CD4-positive, alpha-beta memory T cell (primary cell): ENCODE measurements at regions of chr2 and their contacts with region 1.

Region 1: GRCh38 chr2:105521205-105521604 is 122.4 kb upstream of the FHL2 start:
- DNase-seq: peak in 4 of 5 donors; percentile 8 to 24 (median 10)
- H3K4me3 ChIP-seq: no peak overlapping the region
- H3K4me3 Mint-ChIP-seq: no peak overlapping the region
- H3K27ac ChIP-seq: no peak overlapping the region
- H3K27ac Mint-ChIP-seq: no peak overlapping the region
- H3K4me1 ChIP-seq: no peaks in the 10 kb centered on the region
- H3K4me1 Mint-ChIP-seq: no peaks in the 10 kb centered on the region
- H3K27me3 ChIP-seq: no peaks in the 10 kb centered on the region
- H3K27me3 Mint-ChIP-seq: peaks cover 3 to 7% of the 10 kb centered on the region in 2 donors

Region 2: DNA sequence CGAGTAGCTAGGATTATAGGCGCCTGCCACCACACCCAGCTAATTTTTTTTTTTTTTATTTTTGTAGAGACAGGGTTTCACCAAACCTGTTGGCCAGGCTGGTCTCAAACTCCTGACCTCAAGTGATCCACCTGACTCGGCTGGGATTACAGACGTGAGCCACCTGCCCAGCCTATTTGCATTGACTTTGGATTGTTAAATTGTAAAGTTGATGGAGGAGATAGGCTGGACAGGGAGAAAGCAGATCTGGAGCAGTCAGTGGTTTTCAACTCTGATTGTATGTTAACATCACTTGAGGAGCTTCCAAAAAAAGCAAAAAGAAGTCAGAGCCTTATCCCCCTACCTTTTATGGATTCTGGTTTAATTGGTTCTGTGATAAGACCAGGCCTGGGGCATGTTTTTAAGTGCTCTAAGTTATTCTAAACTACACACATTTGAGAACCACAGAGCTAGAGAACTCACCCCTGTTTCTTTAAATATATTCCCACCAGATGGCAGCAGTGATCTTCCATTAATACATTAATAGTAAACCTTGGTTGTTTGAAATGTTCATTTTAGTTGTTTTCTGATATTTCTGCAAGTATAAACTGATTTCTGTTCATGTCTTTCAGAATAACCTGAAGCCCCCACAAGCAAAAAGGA is 176.4 kb before region 1 on chr2:
- CTCF ChIA-PET with region 1: interaction called, 5 read pairs
- POLR2A ChIA-PET with region 1: no interaction called
- intact Hi-C with region 1: loop called (anchors 1 kb)
- DNase-seq: peak in 3 of 5 donors; percentile 20 to 29 (median 26)
- H3K4me3 ChIP-seq: no peak overlapping the region
- H3K4me3 Mint-ChIP-seq: no peak overlapping the region
- H3K27ac ChIP-seq: no peak overlapping the region
- H3K27ac Mint-ChIP-seq: peak overlapping the region in 1 of 7 donors; percentile 22
- H3K4me1 ChIP-seq: no peaks in the 10 kb centered on the region
- H3K4me1 Mint-ChIP-seq: peaks cover 5 to 9% (median 7%) of the 10 kb centered on the region in 4 donors
- H3K27me3 ChIP-seq: no peaks in the 10 kb centered on the region
- H3K27me3 Mint-ChIP-seq: no peaks in the 10 kb centered on the region

Region 3: DNA sequence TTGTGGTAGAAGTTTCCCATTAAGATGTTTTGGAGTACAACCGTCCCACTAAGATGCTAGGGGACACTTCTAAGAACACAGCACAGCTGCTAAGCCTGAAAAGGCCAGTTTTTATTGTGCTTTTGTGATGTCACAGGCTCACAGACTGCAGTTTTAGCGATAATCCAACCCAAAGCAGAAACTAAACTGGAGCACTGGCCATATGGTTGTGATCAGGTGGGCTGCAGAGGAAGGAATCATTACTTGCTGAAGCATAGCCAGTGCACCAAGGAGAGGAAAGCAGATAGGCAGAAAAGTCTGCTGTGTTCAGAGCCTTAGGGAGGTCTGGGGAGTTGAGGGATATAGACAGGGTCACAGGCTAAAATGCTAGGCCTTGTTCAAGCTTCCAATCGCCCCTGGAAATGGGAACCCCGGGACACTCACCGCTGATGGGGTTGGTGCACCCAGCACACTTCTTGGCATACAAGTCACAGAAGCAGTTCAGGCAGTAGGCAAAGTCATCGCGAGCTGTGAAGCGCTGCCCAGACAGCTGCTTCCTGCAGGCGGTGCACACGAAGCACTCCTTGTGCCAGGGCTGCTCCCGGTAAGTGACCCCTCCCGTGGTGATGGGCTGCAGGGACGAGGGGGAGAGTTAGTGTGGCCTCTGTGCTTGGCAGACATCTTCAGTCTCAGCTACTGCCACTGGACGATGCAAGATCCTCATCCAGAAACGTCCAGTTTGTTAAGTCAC is 158.2 kb before region 1 on chr2:
- CTCF ChIA-PET with region 1: interaction called, 77 read pairs
- POLR2A ChIA-PET with region 1: no interaction called
- intact Hi-C with region 1: no loop called
- DNase-seq: no peak
- H3K4me3 ChIP-seq: no peak overlapping the region
- H3K4me3 Mint-ChIP-seq: no peak overlapping the region
- H3K27ac ChIP-seq: no peak overlapping the region
- H3K27ac Mint-ChIP-seq: peak overlapping the region in 1 of 7 donors; percentile 52
- H3K4me1 ChIP-seq: peaks cover 12% of the 10 kb centered on the region
- H3K4me1 Mint-ChIP-seq: peaks cover 16 to 28% (median 22%) of the 10 kb centered on the region in 4 donors
- H3K27me3 ChIP-seq: no peaks in the 10 kb centered on the region
- H3K27me3 Mint-ChIP-seq: no peaks in the 10 kb centered on the region

Region 4: GRCh38 chr2:105369747-105370690 is 151.2 kb before region 1 on chr2:
- CTCF ChIA-PET with region 1: interaction called, 77 read pairs
- POLR2A ChIA-PET with region 1: no interaction called
- intact Hi-C with region 1: loop called (anchors 1 kb)
- DNase-seq: peak; percentile 77 to 85 (median 82)
- H3K4me3 ChIP-seq: no peak overlapping the region
- H3K4me3 Mint-ChIP-seq: peak overlapping the region in 7 of 8 donors; percentile 0 to 65 (median 16)
- H3K27ac ChIP-seq: no peak overlapping the region
- H3K27ac Mint-ChIP-seq: peak overlapping the region in 5 of 7 donors; percentile 14 to 68 (median 25)
- H3K4me1 ChIP-seq: peaks cover 27% of the 10 kb centered on the region
- H3K4me1 Mint-ChIP-seq: peaks cover 15 to 27% (median 25%) of the 10 kb centered on the region in 4 donors
- H3K27me3 ChIP-seq: no peaks in the 10 kb centered on the region
- H3K27me3 Mint-ChIP-seq: no peaks in the 10 kb centered on the region

Region 5: DNA sequence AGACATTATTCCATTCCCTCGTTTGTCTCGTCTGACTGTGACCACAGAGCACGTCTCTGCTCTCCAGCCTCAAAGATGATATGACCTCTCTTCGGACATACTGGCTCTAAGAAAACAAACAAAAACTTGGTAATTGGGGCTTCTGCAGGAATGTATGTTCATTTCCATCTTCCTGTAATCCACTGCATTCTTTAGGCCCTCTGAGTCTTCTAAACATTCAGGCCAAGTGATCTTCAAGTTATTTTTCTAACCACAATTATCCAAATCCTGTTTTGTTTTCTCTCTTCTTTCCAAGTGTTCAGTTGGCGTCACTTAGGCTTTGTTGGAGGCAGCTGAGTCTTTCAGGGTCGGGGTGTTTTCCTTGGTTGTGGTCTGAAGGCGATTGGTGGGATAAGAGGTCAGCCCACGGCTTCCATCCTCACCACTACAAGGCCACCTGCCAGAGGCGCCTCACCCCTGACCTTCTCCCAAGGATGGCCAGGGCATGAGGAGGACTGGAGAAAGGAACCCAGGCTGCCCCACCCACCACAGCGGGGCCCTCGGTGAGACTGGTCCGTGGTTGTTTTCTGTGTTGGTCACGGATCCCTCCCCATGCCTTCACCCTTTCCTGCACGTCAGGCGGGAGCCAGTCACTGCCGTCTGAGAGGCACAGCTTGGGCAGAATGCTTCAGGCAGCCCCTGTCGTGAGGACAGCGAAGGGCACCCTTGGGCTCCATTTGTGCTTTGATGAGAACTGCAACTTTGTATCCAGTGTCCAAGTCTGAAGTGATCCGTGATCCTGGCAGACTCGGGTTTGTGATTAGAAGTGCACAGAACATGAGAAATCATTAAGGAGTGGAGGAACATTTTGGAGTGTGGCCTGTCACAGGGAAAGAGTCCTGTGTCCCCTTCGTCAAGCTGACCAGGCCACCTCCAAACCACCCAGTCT is 33.8 kb before region 1 on chr2:
- CTCF ChIA-PET with region 1: no interaction called
- POLR2A ChIA-PET with region 1: no interaction called
- intact Hi-C with region 1: no loop called
- DNase-seq: no peak
- H3K4me3 ChIP-seq: no peak overlapping the region
- H3K4me3 Mint-ChIP-seq: no peak overlapping the region
- H3K27ac ChIP-seq: no peak overlapping the region
- H3K27ac Mint-ChIP-seq: no peak overlapping the region
- H3K4me1 ChIP-seq: no peaks in the 10 kb centered on the region
- H3K4me1 Mint-ChIP-seq: no peaks in the 10 kb centered on the region
- H3K27me3 ChIP-seq: no peaks in the 10 kb centered on the region
- H3K27me3 Mint-ChIP-seq: peaks cover 0 to 5% of the 10 kb centered on the region in 2 donors